PC-3 (cell line): ENCODE measurements at regions of chr16 and their contacts with region 1.

Region 1: GRCh38 chr16:66608241-66609138 is 4.0 kb downstream of the CMTM3 start:
- DNase-seq: peak; percentile 83
- ATAC-seq: peak; percentile 78
- H3K4me3 ChIP-seq: no peak overlapping the region
- H3K27ac ChIP-seq: no peak overlapping the region
- H3K4me1 ChIP-seq: peaks cover 6% of the 10 kb centered on the region; the same call in 1 of the 2 replicates
- H3K27me3 ChIP-seq: no peaks in the 10 kb centered on the region
- CTCF ChIP-seq: peak; percentile 85

Region 2: GRCh38 chr16:66406534-66407221 is 201.8 kb before region 1 on chr16:
- CTCF ChIA-PET with region 1: interaction called, 4 read pairs
- POLR2A ChIA-PET with region 1: no interaction called
- intact Hi-C with region 1: loop called (anchors 2 kb)
- DNase-seq: peak; percentile 69
- ATAC-seq: peak; percentile 66
- H3K4me3 ChIP-seq: peak overlapping the region; percentile 79
- H3K27ac ChIP-seq: peak overlapping the region; percentile 41
- H3K4me1 ChIP-seq: peaks cover 27% of the 10 kb centered on the region
- H3K27me3 ChIP-seq: no peaks in the 10 kb centered on the region
- CTCF ChIP-seq: peak; percentile 76

Region 3: DNA sequence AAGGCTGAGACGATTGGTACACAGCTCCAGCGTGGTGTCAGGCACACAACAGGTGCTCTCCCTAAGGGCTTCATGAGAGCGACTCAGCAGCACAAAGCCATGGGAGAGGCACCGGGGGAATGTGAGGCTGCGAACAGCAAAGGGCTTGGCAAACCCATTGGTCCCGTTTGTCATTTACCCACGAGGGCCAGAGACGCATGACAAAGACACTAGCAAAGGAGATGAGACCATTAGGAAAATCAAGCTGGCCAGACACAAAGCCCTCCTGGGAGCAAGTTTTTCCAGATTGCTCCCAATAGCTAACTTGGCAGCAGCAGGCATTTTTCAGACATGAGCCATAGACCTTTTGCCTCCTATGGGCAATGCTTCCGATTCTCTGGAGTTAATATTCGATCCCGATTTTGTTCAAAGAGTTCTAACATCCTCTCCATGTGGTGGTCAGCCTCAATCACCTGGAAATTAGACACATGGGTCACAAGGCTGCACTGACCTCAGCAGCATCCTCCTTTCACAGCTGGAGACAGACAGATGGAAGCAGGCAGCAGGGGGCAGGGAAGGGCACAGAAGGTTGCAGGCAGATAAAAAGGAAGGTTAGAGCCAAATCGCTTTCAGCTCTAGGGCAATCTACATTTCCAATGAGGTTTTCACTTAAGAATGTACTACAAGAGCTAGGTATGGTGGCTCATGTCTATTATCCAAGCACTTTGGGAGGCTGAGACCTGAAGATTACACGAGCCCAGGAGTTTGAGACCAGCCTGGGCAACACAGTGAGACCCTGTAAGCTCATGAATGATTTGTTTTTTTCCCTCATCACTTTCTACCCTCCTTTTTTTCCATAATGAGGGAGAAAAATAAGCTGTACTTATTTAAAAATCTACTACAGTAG is 96.6 kb before region 1 on chr16:
- CTCF ChIA-PET with region 1: interaction called, 3 read pairs
- POLR2A ChIA-PET with region 1: interaction called, 13 read pairs
- intact Hi-C with region 1: no loop called
- DNase-seq: peak; percentile 90
- ATAC-seq: peak; percentile 8
- H3K4me3 ChIP-seq: peak overlapping the region; percentile 53; the same call in 1 of the 2 replicates
- H3K27ac ChIP-seq: peak overlapping the region; percentile 82
- H3K4me1 ChIP-seq: peaks cover 74% of the 10 kb centered on the region
- H3K27me3 ChIP-seq: no peaks in the 10 kb centered on the region
- CTCF ChIP-seq: no peak

Region 4: DNA sequence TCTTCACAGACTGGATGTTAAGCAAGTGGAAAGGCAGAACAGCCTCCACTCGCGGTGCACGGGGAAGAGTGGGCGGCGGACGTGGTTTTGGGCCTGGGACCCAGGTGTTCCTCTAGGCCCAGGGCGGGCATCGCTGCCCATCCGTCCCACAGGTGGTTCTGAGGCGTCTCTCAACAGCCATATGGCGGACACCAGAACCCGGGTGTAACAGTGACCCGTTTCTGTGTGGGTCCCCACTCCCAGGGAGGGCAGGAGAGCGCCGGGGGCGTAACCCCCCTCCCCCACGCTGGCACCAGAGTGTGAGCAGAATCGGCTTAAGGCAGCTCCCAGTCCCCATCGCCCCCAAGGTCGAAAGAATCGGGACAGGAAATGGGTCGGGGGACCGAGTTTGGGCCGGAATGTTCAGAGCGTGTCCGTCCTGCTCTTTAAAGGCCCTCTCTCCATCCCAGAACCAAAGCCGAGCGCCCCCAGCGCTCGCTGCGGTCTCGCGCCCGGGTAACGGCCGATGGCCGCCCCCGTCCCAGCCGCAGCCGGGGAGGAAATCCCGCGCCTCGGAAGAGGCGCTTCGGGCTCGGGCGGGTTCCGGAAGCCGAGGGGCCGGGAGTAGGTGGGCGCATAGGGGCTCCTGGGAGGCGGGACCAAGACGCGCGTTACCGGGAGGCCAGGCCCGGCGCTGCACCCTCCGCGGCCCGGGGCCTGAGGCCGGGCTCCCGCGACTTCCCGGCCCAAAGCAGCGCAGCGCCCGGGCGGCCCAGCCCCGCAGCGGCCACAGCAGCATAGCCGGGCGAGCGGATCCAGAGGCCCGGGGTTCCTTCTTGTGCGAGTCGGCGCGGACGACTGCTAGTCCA is 59.0 kb before region 1 on chr16 and contains the start of gene TK2:
- CTCF ChIA-PET with region 1: no interaction called
- POLR2A ChIA-PET with region 1: no interaction called
- intact Hi-C with region 1: no loop called
- DNase-seq: peak; percentile 30
- ATAC-seq: peak; percentile 76
- H3K4me3 ChIP-seq: peak within 1 kb of the TSS; percentile 70
- H3K27ac ChIP-seq: no peak within 1 kb of the TSS; the same call in 1 of the 2 replicates
- H3K4me1 ChIP-seq: peaks cover 21% of the 10 kb centered on the region
- H3K27me3 ChIP-seq: no peaks in the 10 kb centered on the region
- CTCF ChIP-seq: peak; percentile 26; the same call in 1 of the 2 replicates
- total RNA-seq, gene TK2: 8.3 and 14.1 TPM in 2 replicates

Region 5: DNA sequence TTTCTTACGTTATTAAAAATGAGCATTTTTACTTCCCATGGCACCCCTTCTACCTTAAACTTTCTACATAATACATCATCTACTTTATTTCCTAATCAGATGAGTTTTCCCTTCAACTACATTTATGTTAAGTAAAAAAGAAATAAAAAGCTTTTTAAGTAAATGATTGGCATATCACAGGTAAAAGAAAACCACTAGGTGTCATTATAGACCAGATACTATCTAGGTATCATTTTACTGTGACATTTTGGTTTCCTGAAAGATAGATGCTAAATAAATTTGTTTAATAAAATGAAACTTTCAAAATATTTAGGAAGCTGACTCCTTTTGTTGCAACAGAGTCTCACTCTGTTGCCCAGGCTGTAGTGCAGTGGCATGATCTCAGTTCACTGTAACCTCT is 46.1 kb before region 1 on chr16:
- CTCF ChIA-PET with region 1: no interaction called
- POLR2A ChIA-PET with region 1: no interaction called
- intact Hi-C with region 1: loop called (anchors 2 kb)
- DNase-seq: no peak
- ATAC-seq: no peak
- H3K4me3 ChIP-seq: no peak overlapping the region
- H3K27ac ChIP-seq: peak overlapping the region; percentile 46
- H3K4me1 ChIP-seq: no peaks in the 10 kb centered on the region
- H3K27me3 ChIP-seq: no peaks in the 10 kb centered on the region
- CTCF ChIP-seq: peak; percentile 40; the same call in 1 of the 2 replicates

Region 6: DNA sequence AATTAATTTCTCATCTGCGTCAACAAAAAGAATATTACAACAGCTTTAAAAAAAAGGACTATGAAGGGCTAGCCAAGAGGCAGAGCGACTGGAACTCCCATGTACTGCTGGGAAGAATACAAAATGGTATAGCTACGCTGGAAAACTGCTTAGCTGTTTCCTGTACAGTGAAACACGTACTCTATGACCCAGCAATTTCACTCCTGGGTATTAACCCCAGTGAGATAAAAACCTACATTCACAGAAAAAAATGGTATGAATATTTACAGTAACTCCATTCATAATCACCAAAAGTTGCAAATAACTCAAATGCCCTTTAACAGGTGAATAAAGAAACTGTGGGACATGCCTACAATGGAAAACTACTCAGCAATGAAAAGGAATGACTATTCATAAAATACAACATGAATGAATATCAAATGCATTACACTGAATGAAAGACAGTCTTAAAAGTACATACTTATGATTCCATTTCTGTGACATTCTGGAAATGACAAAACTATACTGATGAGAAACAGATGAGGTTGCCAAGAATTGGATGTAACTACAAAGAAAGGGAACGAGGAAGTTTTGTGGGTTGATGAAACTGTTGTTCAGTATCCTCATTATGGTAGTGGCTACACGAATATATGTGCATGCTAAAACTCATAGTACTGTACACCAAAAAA is 60.4 kb after region 1 on chr16:
- CTCF ChIA-PET with region 1: no interaction called
- POLR2A ChIA-PET with region 1: no interaction called
- intact Hi-C with region 1: no loop called
- DNase-seq: no peak
- ATAC-seq: no peak
- H3K4me3 ChIP-seq: no peak overlapping the region
- H3K27ac ChIP-seq: no peak overlapping the region
- H3K4me1 ChIP-seq: no peaks in the 10 kb centered on the region
- H3K27me3 ChIP-seq: no peaks in the 10 kb centered on the region
- CTCF ChIP-seq: no peak

Region 7: DNA sequence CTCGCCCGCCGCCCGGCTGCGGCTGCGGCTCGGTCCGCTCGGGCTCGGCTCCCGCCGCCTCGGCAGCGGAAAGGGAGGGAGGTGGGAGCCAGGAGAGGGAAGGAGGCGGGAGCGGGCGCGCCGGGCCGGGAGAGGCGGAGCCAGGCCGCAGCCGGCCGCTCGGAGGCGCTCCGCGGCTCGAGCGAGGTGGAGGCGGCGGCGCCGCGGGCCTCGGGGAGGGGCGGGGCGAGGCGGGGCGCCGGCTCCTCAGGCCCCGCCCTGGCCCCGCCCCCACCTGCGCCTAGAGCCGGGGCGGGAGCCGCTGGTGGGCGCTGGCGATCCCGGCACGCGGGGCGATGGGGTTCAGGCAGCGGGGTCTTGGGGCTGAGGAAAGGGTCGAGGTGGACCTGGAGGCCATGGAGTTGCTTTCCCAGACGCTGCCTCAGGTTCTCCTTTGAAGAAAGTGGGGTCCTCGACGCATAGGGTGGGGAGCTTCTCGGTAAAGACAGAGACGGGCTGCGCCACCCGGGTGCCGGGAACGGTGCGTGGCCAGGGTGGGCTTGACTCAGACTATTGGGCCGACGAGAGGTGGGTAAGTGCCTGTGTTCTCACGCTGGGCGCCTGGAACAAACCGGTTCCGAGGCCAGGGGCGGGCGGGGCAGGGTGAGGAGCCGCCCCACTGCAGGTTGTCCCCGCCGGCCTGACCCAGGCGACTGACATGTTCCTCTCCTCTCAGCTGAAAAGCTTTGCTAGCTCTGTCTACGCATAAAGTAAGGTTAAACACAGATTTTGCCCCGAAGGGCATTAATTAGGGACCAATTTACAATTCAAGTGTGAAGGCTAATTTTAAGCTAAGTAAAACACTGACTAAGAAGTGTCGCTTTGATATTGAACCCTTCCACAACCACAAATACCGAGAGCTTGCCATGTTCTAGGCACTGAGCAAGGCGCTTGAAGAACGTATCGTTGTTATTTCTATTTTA is 88.5 kb after region 1 on chr16 and contains the start of gene CMTM4:
- CTCF ChIA-PET with region 1: no interaction called
- POLR2A ChIA-PET with region 1: no interaction called
- intact Hi-C with region 1: loop called (anchors 10 kb)
- DNase-seq: peak; percentile 87
- ATAC-seq: peak; percentile 84
- H3K4me3 ChIP-seq: peak within 1 kb of the TSS; percentile 87
- H3K27ac ChIP-seq: no peak within 1 kb of the TSS
- H3K4me1 ChIP-seq: peaks cover 30% of the 10 kb centered on the region
- H3K27me3 ChIP-seq: no peaks in the 10 kb centered on the region
- CTCF ChIP-seq: peak; percentile 32; the same call in 1 of the 2 replicates
- total RNA-seq, gene CMTM4: 16.9 and 17.0 TPM in 2 replicates

Region 8: DNA sequence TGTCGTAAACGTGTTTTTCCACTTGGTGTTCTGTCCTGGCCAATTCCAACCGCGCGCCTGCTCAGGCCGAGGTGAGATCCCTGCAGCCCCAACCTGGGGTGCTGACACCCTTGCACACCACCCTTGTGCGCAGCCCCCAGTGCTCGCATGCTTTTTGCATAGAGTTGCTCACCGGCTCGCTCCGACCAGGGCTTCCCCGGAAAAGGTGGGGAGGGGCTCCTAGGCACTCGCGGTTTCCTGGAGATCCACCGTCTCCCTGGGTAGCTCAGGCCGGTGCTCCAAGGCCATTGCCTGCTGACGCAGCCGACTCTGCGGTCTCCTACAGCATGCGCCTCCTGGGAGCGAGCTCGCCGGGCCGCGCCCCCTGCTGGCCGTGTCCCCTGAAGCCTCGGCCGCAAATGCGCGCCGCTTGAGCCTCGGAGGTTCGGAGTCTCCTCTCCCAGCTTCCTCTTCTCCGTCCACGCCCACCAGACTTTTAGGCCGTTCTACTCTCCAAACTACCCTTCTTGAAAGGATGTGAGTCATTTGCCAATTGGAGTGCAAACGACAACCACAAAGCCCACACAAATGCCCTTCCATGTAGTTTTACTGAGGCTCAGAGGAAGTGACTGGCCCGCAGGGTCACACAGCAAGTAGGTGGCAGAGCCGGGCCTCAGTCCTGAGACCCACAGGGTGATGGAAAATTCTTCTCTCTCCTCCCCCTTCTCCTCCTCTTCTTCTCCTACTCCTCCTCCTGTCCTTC is 264.6 kb after region 1 on chr16:
- CTCF ChIA-PET with region 1: interaction called, 13 read pairs
- POLR2A ChIA-PET with region 1: no interaction called
- intact Hi-C with region 1: loop called (anchors 1 kb)
- DNase-seq: peak; percentile 98
- ATAC-seq: peak; percentile 94
- H3K4me3 ChIP-seq: peak overlapping the region; percentile 63
- H3K27ac ChIP-seq: peak overlapping the region; percentile 66
- H3K4me1 ChIP-seq: peaks cover 9% of the 10 kb centered on the region
- H3K27me3 ChIP-seq: no peaks in the 10 kb centered on the region
- CTCF ChIP-seq: peak; percentile 87